OCI-LY7 (cell line): ENCODE measurements at regions of chr2 and their contacts with region 1.

Region 1: DNA sequence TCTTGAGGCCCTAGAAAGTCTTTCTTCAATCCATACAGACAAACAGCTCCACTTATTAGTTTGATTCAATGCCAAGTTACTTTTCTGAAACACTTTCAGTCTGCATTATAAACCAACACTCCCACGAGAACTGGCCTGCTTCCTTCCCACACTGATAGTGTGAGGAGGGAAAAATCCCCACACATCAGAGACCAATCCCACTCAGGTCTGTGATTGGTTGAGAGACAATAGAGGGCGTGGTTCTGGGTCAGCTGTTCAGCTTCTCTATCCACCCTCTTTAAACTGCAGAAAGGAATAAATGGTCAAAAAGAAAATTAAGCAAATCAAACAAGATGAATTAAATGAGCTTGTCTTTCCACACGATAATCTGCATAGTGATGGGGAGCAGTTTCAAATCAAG is 152.5 kb downstream of the NRP2 start:
- DNase-seq: no peak
- H3K4me3 ChIP-seq: no peak overlapping the region
- H3K27ac ChIP-seq: no peak overlapping the region
- H3K4me1 ChIP-seq: no peaks in the 10 kb centered on the region
- CTCF ChIP-seq: no peak

Region 2: GRCh38 chr2:205857520-205858237 is 22.9 kb after region 1 on chr2:
- CTCF ChIA-PET with region 1: no interaction called
- POLR2A ChIA-PET with region 1: interaction called, 10 read pairs
- intact Hi-C with region 1: no loop called
- DNase-seq: no peak
- H3K4me3 ChIP-seq: no peak overlapping the region
- H3K27ac ChIP-seq: no peak overlapping the region
- H3K4me1 ChIP-seq: no peaks in the 10 kb centered on the region
- CTCF ChIP-seq: no peak